Activated CD8-positive, alpha-beta T cell treated with anti-CD3 and anti-CD28 coated beads for 36 hours (primary cell): ENCODE measurements at regions of chr13 and their contacts with region 1.

Region 1: GRCh38 chr13:41004875-41005693 is 14.0 kb downstream of the ELF1 start:
- DNase-seq: no peak
- ATAC-seq: peak; percentile 80
- H3K4me3 Mint-ChIP-seq: peak overlapping the region; percentile 68
- H3K27ac Mint-ChIP-seq: peak overlapping the region; percentile 95
- H3K4me1 Mint-ChIP-seq: peaks cover 71% of the 10 kb centered on the region
- H3K27me3 Mint-ChIP-seq: no peaks in the 10 kb centered on the region
- CTCF ChIP-seq: no peak

Region 2: DNA sequence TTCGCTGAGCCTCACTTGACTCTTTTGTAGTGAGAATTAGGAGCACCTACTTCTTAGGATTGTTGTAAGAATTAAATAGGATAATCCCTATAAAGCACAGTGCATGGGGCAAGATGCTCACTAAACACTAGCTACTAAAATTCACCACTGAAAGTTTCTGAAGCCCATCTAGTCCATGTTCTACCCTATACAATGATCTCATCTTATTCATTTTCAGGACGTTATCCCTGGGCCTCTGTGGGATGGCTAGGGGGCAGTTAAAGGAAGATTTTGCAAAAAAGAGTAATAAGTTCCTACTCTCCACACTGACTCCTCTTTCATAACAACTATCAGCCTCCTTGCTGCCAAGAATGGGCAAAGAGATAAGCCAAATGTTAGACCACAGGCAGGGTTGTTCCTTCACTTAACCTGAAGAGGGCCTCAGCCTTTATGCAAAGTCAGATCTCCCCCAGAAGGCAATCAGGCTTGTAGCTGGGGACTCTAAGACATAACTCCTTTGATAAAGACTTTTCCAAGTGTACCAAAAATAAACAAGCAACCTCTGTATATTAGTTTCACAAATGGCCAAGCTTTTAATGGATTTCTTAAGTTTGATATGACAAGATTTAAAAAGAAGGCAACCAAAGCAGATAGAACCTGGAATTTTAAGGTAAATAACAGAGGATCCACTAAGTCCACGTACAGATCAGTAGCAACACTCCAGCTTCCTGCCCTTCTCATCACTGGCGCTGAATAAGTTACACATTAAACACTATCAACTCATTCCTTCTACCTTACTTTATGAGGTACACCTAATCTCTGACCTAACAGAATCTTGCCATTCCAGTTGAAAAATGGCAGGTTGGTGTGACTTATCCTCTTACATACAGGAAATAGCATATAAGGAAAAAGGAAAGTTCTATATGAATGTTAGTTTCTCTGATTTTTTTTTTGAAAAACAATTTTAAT is 30.4 kb before region 1 on chr13:
- CTCF ChIA-PET with region 1: interaction called, 10 read pairs
- POLR2A ChIA-PET with region 1: interaction called, 4 read pairs
- intact Hi-C with region 1: loop called (anchors 10 kb)
- DNase-seq: peak; percentile 53
- ATAC-seq: peak; percentile 86
- H3K4me3 Mint-ChIP-seq: peak overlapping the region; percentile 49
- H3K27ac Mint-ChIP-seq: peak overlapping the region; percentile 83
- H3K4me1 Mint-ChIP-seq: peaks cover 87% of the 10 kb centered on the region
- H3K27me3 Mint-ChIP-seq: no peaks in the 10 kb centered on the region
- CTCF ChIP-seq: peak; percentile 54

Region 3: DNA sequence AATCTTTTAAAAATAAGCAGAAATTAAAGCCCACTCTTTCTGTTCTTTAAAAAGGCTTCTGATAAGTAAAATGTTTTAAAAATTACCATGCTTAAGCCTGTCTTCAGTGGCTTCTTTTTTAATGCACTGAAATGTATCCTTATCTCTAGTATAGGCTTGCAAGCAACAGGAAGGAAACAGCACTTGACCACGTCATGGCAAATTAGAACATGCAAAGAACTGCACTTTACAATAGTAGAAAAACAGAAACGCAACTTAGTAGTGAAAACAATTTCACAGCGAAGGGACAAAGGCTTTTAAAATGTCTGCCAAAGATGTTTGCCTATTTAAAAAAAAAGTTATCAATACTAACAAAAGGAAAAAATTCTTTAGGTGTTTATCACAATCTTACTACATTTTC is 22.3 kb before region 1 on chr13:
- CTCF ChIA-PET with region 1: interaction called, 10 read pairs
- POLR2A ChIA-PET with region 1: interaction called, 4 read pairs
- intact Hi-C with region 1: no loop called
- DNase-seq: peak; percentile 76
- ATAC-seq: peak; percentile 73
- H3K4me3 Mint-ChIP-seq: peak overlapping the region; percentile 99
- H3K27ac Mint-ChIP-seq: peak overlapping the region; percentile 92
- H3K4me1 Mint-ChIP-seq: peaks cover 46% of the 10 kb centered on the region
- H3K27me3 Mint-ChIP-seq: no peaks in the 10 kb centered on the region
- CTCF ChIP-seq: no peak

Region 4: DNA sequence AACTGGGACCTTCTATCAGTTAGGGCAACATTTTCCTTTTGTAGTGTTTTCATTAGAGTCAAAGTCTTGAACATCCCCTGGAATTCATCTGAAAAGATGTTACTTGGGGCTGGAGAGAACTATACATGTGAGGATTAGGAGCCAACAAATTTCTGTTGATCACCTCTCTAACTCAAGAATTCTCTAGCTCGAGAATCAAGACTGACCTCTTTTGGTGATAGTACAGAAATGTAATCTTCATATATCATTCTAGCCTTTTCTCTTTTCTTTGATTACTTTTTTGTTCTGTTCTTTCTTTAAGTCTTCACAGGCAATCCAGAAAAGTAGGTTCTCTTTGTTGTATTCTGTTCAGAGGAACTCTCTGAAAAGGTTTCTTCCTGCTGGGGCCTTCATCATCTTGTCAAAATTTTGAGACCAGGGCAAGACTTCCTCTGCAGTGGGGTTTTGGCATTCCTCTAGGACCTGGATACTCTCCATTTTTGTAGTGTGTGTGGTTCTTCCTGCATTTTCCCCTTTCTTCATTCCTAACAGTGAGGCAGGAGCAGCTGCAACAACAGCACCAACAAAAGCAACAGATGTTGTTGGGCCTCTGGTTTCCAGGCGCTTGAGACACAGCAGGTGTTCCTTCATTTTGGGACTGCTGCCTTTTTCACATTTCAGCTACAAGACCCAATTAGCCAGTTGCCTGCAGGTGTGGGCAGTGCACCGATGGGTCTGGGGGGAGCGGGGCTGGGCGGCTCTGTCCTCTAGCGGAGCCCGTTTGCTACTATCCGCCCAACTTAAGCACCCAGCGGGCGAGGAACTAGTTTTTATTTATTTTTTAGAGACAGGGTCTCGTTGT is 12.2 kb before region 1 on chr13:
- CTCF ChIA-PET with region 1: interaction called, 13 read pairs
- POLR2A ChIA-PET with region 1: interaction called, 6 read pairs
- intact Hi-C with region 1: loop called (anchors 1 kb)
- DNase-seq: no peak
- ATAC-seq: no peak
- H3K4me3 Mint-ChIP-seq: no peak overlapping the region
- H3K27ac Mint-ChIP-seq: peak overlapping the region; percentile 82
- H3K4me1 Mint-ChIP-seq: peaks cover 74% of the 10 kb centered on the region
- H3K27me3 Mint-ChIP-seq: no peaks in the 10 kb centered on the region
- CTCF ChIP-seq: no peak

Region 5: GRCh38 chr13:41019011-41019487 is 14.0 kb after region 1 on chr13 and contains the start of gene ELF1:
- CTCF ChIA-PET with region 1: interaction called, 3 read pairs
- POLR2A ChIA-PET with region 1: interaction called, 23 read pairs
- intact Hi-C with region 1: no loop called
- DNase-seq: peak; percentile 76
- ATAC-seq: peak; percentile 88
- H3K4me3 Mint-ChIP-seq: peak within 1 kb of the TSS; percentile 91
- H3K27ac Mint-ChIP-seq: peak within 1 kb of the TSS; percentile 98
- H3K4me1 Mint-ChIP-seq: peaks cover 24% of the 10 kb centered on the region
- H3K27me3 Mint-ChIP-seq: no peaks in the 10 kb centered on the region
- CTCF ChIP-seq: no peak
- total RNA-seq, gene ELF1: 85.2 to 88.2 TPM